ENCODE measurements at regions of chr9 and their contacts with region 1.

Region 1: GRCh38 chr9:38215465-38215864 is 146.4 kb upstream of the SHB start:
- DNase-seq: no peak
- H3K4me3 ChIP-seq: no peak overlapping the region
- H3K27ac ChIP-seq: no peak overlapping the region
- H3K4me1 ChIP-seq: no peaks in the 10 kb centered on the region
- H3K27me3 ChIP-seq: no peaks in the 10 kb centered on the region
- CTCF ChIP-seq: no peak
- EP300 ChIP-seq: no peak
- POLR2A ChIP-seq: no peak

Region 2: GRCh38 chr9:37788332-37788731 is 427.1 kb before region 1 on chr9:
- intact Hi-C with region 1: no loop called
- DNase-seq: no peak
- H3K4me3 ChIP-seq: no peak overlapping the region
- H3K27ac ChIP-seq: no peak overlapping the region
- H3K4me1 ChIP-seq: peaks cover 9 to 20% (median 18%) of the 10 kb centered on the region in 4 donors
- H3K27me3 ChIP-seq: peaks cover 0 to 9% (median 5%) of the 10 kb centered on the region in 4 donors
- CTCF ChIP-seq: no peak
- EP300 ChIP-seq: no peak
- POLR2A ChIP-seq: no peak

Region 3: GRCh38 chr9:38301376-38302106 is 86.1 kb after region 1 on chr9:
- intact Hi-C with region 1: loop called (anchors 5 kb)
- DNase-seq: no peak
- H3K4me3 ChIP-seq: no peak overlapping the region
- H3K27ac ChIP-seq: no peak overlapping the region
- H3K4me1 ChIP-seq: peaks cover 0 to 6% (median 1%) of the 10 kb centered on the region in 4 donors
- H3K27me3 ChIP-seq: no peaks in the 10 kb centered on the region
- CTCF ChIP-seq: no peak
- EP300 ChIP-seq: no peak
- POLR2A ChIP-seq: no peak